GM12878 (cell line): ENCODE measurements at regions of chr1 and their contacts with region 1.

Region 1: DNA sequence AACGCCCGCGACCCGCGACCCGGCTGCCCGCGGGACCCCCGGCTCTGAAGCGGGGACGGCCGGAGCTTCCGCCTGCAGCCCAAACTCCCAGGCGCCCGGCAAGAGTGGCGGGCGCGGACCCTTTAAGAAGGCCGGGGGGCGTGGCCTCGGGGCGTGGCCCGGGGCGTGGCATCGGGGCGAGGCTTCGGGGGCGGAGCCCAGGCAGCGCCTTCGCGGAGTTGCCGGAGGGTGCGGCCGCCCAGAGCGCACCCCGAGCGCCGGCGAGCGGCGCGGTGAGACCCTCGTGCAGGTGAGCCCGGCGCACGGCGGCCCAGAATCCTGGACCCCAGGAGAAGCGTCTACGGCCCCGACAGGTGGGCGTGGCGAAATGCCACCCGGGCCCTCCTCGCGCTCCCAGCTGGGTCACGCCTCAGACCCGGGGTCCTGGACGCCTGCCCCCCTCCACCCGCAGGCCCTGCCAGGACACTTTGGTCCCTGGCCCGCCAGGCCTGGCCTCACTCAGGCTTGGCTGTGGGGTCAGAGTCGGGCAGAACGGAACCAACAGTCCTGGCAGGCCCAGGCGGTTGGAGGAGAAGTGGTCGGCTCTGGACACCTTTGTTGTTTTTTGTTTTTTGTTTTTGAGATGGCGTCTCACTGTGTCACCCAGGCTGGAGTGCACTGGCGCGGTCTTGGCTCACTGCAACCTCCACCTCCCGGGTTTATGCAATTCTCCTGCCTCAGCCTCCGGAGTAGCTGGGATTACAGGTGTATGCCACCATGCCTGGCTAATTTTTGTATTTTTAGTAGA is 14.4 kb downstream of the RNF223 start:
- DNase-seq: no peak
- ATAC-seq: peak; percentile 81
- H3K4me3 ChIP-seq: peak overlapping the region; percentile 67; the same call in 1 of the 2 replicates
- H3K27ac ChIP-seq: no peak overlapping the region
- H3K4me1 ChIP-seq: peaks cover 28% of the 10 kb centered on the region
- H3K27me3 ChIP-seq: no peaks in the 10 kb centered on the region
- CTCF ChIP-seq: 0 out of 6 replicates have a peak, but pooled peaks of 1 of the 3 experiments have one; percentile 10
- EP300 ChIP-seq: no peak
- POLR2A ChIP-seq: no peak
- RAD21 ChIP-seq: no peak

Region 2: GRCh38 chr1:983799-984473 is 75.8 kb before region 1 on chr1:
- CTCF ChIA-PET with region 1: interaction called, 71 read pairs
- POLR2A ChIA-PET with region 1: interaction called, 5 read pairs
- RAD21 ChIA-PET with region 1: interaction called, 16 read pairs
- SMC1A ChIA-PET with region 1: interaction called, 11 read pairs
- in situ Hi-C with region 1: loop called (anchors 5 kb)
- intact Hi-C with region 1: loop called (anchors 1 kb)
- DNase-seq: no peak
- ATAC-seq: peak; percentile 88
- H3K4me3 ChIP-seq: no peak overlapping the region
- H3K27ac ChIP-seq: no peak overlapping the region
- H3K4me1 ChIP-seq: no peaks in the 10 kb centered on the region
- H3K27me3 ChIP-seq: no peaks in the 10 kb centered on the region
- CTCF ChIP-seq: peak; percentile 56 to 97 (median 78)
- EP300 ChIP-seq: no peak
- POLR2A ChIP-seq: no peak
- RAD21 ChIP-seq: peak; percentile 79

Region 3: GRCh38 chr1:1013105-1013921 is 46.4 kb before region 1 on chr1 and contains the start of gene ISG15:
- CTCF ChIA-PET with region 1: interaction called, 68 read pairs
- POLR2A ChIA-PET with region 1: interaction called, 5 read pairs
- RAD21 ChIA-PET with region 1: interaction called, 24 read pairs
- SMC1A ChIA-PET with region 1: interaction called, 11 read pairs
- in situ Hi-C with region 1: no loop called
- intact Hi-C with region 1: loop called (anchors 5 kb)
- DNase-seq: peak; percentile 79
- ATAC-seq: peak; percentile 91
- H3K4me3 ChIP-seq: peak within 1 kb of the TSS; percentile 90
- H3K27ac ChIP-seq: peak within 1 kb of the TSS; percentile 92
- H3K4me1 ChIP-seq: peaks cover 12% of the 10 kb centered on the region
- H3K27me3 ChIP-seq: no peaks in the 10 kb centered on the region
- CTCF ChIP-seq: no peak
- EP300 ChIP-seq: peak in 1 of 2 experiments; percentile 39; a peak in 1 of 4 replicates
- POLR2A ChIP-seq: peak; percentile 81
- RAD21 ChIP-seq: no peak
- polyA plus RNA-seq, gene ISG15: 68.9 to 126 TPM

Region 4: GRCh38 chr1:1033009-1033587 is 26.6 kb before region 1 on chr1:
- CTCF ChIA-PET with region 1: interaction called, 83 read pairs
- POLR2A ChIA-PET with region 1: interaction called, 15 read pairs
- RAD21 ChIA-PET with region 1: interaction called, 58 read pairs
- SMC1A ChIA-PET with region 1: interaction called, 24 read pairs
- in situ Hi-C with region 1: no loop called
- intact Hi-C with region 1: loop called (anchors 1 kb)
- DNase-seq: peak; percentile 72
- ATAC-seq: peak; percentile 92
- H3K4me3 ChIP-seq: peak overlapping the region; percentile 50; the same call in 1 of the 2 replicates
- H3K27ac ChIP-seq: no peak overlapping the region
- H3K4me1 ChIP-seq: peaks cover 27% of the 10 kb centered on the region
- H3K27me3 ChIP-seq: no peaks in the 10 kb centered on the region
- CTCF ChIP-seq: peak; percentile 80 to 97 (median 84)
- EP300 ChIP-seq: 0 out of 4 replicates have a peak, but pooled peaks of 1 of the 2 experiments have one; percentile 35
- POLR2A ChIP-seq: no peak
- RAD21 ChIP-seq: peak; percentile 74

Region 5: DNA sequence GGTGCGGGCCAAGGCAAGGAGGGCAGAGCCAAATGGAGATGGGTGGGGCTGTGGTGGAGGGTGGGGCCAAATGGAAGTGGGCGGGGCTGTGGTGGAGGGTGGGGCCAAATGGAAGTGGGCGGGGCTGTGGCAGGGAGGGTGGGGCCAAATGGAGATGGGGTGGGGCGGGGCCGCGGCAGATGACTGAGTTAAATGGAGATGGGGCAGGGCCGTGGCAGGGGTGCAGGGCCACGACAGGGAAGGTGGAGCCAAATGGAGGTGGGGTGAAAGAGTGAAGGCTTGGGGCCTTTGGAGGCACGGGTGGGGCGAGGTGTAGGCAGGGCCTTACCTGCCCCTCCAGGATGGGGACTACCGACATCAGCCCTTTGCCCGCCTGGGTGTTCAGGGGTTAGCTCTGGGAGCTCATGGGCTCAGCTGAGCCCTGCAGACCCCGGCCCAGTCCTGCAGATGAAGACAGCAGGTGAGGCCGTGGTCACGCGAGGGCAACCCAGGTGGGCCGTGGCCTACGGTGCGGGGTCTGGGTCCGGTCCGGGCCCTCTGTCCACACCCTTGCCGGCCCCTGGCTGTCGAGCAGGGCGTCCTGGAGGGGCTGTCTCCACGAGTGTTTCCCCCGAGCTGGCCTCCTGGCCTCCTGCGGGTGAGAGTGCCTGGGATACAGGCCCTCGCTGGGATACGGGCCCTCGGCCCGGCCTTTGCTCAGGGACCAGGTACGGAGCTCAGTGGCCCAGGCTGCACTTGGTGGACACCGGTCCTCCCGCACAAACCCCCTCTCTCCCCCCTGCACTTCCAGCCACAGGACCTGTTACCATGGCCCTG is 32.2 kb after region 1 on chr1:
- CTCF ChIA-PET with region 1: no interaction called
- POLR2A ChIA-PET with region 1: no interaction called
- RAD21 ChIA-PET with region 1: no interaction called
- SMC1A ChIA-PET with region 1: no interaction called
- in situ Hi-C with region 1: no loop called
- intact Hi-C with region 1: no loop called
- DNase-seq: no peak
- ATAC-seq: peak; percentile 54
- H3K4me3 ChIP-seq: no peak overlapping the region
- H3K27ac ChIP-seq: no peak overlapping the region
- H3K4me1 ChIP-seq: peaks cover 7% of the 10 kb centered on the region; the same call in 1 of the 2 replicates
- H3K27me3 ChIP-seq: no peaks in the 10 kb centered on the region
- CTCF ChIP-seq: no peak
- EP300 ChIP-seq: no peak
- POLR2A ChIP-seq: no peak
- RAD21 ChIP-seq: no peak

Region 6: GRCh38 chr1:1291548-1292441 is 232.1 kb after region 1 on chr1:
- CTCF ChIA-PET with region 1: interaction called, 4 read pairs
- POLR2A ChIA-PET with region 1: no interaction called
- RAD21 ChIA-PET with region 1: interaction called, 13 read pairs
- SMC1A ChIA-PET with region 1: no interaction called
- in situ Hi-C with region 1: no loop called
- intact Hi-C with region 1: no loop called
- DNase-seq: no peak
- ATAC-seq: peak; percentile 96
- H3K4me3 ChIP-seq: no peak overlapping the region
- H3K27ac ChIP-seq: no peak overlapping the region
- H3K4me1 ChIP-seq: no peaks in the 10 kb centered on the region
- H3K27me3 ChIP-seq: no peaks in the 10 kb centered on the region
- CTCF ChIP-seq: peak; percentile 78 to 85 (median 79)
- EP300 ChIP-seq: no peak
- POLR2A ChIP-seq: peak; percentile 60
- RAD21 ChIP-seq: peak; percentile 62